ENCODE measurements at regions of chr9 and their contacts with region 1.

Region 1: GRCh38 chr9:21028466-21028865 is 3.0 kb downstream of the HACD4 start:
- DNase-seq: no peak
- H3K4me3 ChIP-seq: no peak overlapping the region
- H3K27ac ChIP-seq: no peak overlapping the region
- H3K4me1 ChIP-seq: peaks cover 6% of the 10 kb centered on the region
- H3K27me3 ChIP-seq: no peaks in the 10 kb centered on the region
- CTCF ChIP-seq: no peak
- POLR2A ChIP-seq: no peak

Region 2: DNA sequence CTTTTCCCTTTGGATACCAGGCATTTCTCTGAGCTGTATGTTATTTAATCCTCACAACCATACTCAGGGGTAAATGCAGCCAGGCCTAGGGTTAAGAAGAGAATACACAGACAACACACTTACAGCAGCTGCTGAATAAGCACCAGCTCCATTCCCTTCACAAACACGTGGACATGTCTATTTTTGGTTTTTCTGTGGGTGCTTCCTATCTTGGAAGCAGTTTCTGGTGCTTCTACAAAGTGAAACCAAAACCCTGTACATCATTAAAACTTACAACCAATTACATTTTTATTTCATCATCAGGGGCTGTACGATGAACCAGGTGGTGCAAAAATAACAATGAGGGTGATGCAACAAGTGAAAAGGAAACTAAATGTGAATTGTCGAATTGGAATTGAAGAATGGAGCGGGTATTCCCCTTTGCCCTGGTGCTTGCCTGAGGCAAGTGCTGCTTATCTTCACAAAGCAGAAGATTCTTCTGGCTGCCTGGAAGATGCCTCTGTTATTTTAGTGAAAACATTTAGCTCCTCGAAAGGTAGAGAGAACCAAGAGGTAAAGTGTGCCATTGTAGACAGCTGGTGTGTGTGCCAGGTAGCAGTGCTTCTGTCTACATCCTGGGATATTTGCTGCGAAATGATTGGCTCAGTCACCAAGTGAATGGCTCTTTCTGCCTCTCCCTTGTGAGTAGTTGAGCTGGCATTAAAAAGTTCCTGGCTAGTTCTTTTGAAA is 67.9 kb after region 1 on chr9:
- CTCF ChIA-PET with region 1: no interaction called
- POLR2A ChIA-PET with region 1: no interaction called
- dilution Hi-C with region 1: no loop called
- intact Hi-C with region 1: loop called (anchors 5 kb)
- DNase-seq: peak; percentile 40
- H3K4me3 ChIP-seq: no peak overlapping the region
- H3K27ac ChIP-seq: no peak overlapping the region
- H3K4me1 ChIP-seq: peaks cover 7% of the 10 kb centered on the region
- H3K27me3 ChIP-seq: no peaks in the 10 kb centered on the region
- CTCF ChIP-seq: no peak
- POLR2A ChIP-seq: no peak

Region 3: DNA sequence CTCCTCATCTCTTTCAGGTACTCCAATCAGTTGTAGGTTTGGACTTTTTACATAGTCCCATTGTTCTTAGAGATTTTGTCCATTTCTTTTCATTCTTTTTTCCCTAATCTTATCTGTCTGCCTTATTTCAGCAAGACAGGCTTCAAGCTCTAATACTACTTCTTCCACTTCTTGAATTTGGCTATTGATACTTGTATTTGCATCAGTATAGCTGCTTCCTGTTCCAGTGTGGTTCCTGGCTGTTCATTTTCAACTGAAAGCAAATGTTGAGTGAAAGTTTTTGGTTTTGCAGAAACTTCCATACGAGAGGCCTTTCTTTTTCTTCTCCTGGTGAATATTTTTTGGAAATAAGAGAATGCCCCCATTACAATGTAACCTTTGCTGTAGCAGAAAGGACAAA is 399.8 kb after region 1 on chr9:
- CTCF ChIA-PET with region 1: no interaction called
- POLR2A ChIA-PET with region 1: no interaction called
- dilution Hi-C with region 1: no loop called
- intact Hi-C with region 1: loop called (anchors 10 kb)
- DNase-seq: no peak
- H3K4me3 ChIP-seq: no peak overlapping the region
- H3K27ac ChIP-seq: no peak overlapping the region
- H3K4me1 ChIP-seq: no peaks in the 10 kb centered on the region
- H3K27me3 ChIP-seq: peaks cover 23 to 57% of the 10 kb centered on the region in 2 experiments
- CTCF ChIP-seq: no peak
- POLR2A ChIP-seq: no peak

Measured in endothelial cell of umbilical vein (primary cell).